ENCODE measurements at regions of chr2 and their contacts with region 1.

Region 1: DNA sequence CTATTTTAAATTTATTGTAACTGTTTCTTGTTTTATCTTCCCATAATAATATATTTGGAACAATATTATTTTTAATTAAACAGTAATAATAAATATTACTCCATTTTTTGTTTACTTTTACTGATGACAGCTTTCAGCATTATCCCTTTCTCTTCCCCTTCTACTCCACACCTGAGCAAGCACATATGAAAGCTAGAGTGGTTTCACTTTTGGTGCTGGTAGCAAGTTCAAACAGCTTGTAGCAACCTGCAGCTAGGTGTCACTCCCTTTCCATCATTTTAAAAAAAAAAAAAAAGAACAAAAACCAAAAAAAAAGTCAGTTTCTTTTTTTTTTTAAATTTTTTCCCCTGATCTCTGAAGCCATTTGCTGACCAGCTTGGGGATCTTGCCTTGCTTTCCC is 801.8 kb downstream of the CCDC85A start:
- DNase-seq: peak; percentile 4
- H3K4me3 Mint-ChIP-seq: no peak overlapping the region
- H3K27ac Mint-ChIP-seq: no peak overlapping the region
- H3K4me1 Mint-ChIP-seq: no peaks in the 10 kb centered on the region
- H3K27me3 Mint-ChIP-seq: no peaks in the 10 kb centered on the region
- CTCF ChIP-seq: no peak

Region 2: DNA sequence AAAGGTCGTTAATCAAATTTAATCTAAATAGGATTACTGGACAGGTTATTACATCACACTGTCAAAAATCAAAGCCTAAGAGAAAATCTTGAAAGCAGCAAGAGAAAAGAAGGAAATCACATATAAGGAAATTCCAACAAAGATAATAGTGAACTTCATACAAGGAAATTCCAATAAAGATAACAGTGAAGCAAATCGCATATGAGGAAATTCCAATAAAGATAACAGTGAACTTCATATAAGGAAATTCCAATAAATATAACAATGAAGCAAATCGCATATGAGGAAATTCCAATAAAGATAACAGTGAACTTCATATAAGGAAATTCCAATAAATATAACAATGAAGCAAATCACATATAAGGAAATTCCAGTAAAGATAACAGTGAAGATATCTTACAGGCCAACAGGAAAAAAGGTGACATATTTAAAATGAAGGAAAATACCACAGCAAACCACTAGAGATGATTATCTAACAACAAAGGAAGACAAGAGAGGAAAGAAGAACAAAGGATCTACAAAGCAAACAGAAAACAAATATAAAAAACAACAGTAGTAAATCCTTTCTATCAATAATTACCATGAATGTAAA is 14.1 kb before region 1 on chr2:
- CTCF ChIA-PET with region 1: no interaction called
- POLR2A ChIA-PET with region 1: no interaction called
- intact Hi-C with region 1: loop called (anchors 1 kb)
- DNase-seq: no peak
- H3K4me3 Mint-ChIP-seq: no peak overlapping the region
- H3K27ac Mint-ChIP-seq: no peak overlapping the region
- H3K4me1 Mint-ChIP-seq: no peaks in the 10 kb centered on the region
- H3K27me3 Mint-ChIP-seq: no peaks in the 10 kb centered on the region
- CTCF ChIP-seq: no peak

Measured in MCF 10A (cell line).